Ascending aorta (tissue), 2 donors: ENCODE measurements at regions of chr1 and their contacts with region 1.

Region 1: GRCh38 chr1:157045251-157046218 is at the start of gene ARHGEF11:
- DNase-seq: peak; percentile 69 to 95
- H3K4me3 ChIP-seq: peak within 1 kb of the TSS; percentile 90 to 97
- H3K27ac ChIP-seq: peak within 1 kb of the TSS; percentile 87 to 95
- H3K4me1 ChIP-seq: peaks cover 17 to 31% of the 10 kb centered on the region in 2 donors
- H3K27me3 ChIP-seq: no peaks in the 10 kb centered on the region
- CTCF ChIP-seq: no peak
- total RNA-seq, gene ARHGEF11: 43.5 TPM

Region 2: DNA sequence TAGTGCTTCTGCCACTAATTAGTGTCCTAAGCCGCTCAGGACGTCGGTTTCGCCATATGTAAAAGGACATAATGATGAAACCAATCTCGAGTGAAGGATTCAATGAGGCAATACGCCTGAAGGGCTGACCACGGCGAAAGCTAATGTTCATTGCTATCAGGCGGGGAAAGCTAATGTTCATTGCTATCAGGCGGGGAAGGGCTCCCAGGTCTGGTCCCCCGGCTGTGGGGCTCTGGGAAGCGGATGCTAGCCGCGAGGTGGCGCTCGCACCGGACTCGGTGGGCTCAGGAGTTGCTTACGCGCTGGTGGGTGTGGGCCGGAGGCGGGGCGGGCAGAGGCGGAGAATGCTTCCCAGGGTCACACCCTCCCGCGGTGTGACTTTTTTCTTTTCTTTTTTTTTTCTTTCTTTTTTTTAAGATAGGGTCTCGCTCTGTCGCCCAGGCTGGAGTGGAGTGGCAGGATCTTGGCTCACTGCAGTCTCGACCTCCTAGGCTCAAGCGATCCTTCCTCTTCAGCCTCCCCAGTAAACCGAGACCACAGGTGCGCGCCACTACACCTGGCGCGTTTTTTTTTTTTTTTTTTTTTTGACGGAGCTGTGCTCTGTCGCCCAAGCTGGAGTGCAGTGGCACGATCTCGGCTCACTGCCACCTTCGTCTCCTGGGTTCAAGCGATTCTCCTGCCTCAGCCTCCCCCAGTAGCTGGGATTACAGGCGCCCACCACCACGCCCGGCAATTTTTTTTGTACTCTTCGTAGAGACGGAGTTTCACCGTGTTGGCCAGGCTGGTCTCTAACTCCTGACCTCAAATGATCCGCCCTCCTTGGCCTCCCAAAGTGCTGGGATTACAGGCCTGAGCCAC is 153.1 kb before region 1 on chr1:
- intact Hi-C with region 1: no loop called
- DNase-seq: peak; percentile 36 to 92
- H3K4me3 ChIP-seq: peak overlapping the region; percentile 31 to 70
- H3K27ac ChIP-seq: peak overlapping the region; percentile 92 to 94
- H3K4me1 ChIP-seq: peaks cover 6 to 16% of the 10 kb centered on the region in 2 donors
- H3K27me3 ChIP-seq: no peaks in the 10 kb centered on the region
- CTCF ChIP-seq: peak; percentile 75 to 84 (median 77)

Region 3: DNA sequence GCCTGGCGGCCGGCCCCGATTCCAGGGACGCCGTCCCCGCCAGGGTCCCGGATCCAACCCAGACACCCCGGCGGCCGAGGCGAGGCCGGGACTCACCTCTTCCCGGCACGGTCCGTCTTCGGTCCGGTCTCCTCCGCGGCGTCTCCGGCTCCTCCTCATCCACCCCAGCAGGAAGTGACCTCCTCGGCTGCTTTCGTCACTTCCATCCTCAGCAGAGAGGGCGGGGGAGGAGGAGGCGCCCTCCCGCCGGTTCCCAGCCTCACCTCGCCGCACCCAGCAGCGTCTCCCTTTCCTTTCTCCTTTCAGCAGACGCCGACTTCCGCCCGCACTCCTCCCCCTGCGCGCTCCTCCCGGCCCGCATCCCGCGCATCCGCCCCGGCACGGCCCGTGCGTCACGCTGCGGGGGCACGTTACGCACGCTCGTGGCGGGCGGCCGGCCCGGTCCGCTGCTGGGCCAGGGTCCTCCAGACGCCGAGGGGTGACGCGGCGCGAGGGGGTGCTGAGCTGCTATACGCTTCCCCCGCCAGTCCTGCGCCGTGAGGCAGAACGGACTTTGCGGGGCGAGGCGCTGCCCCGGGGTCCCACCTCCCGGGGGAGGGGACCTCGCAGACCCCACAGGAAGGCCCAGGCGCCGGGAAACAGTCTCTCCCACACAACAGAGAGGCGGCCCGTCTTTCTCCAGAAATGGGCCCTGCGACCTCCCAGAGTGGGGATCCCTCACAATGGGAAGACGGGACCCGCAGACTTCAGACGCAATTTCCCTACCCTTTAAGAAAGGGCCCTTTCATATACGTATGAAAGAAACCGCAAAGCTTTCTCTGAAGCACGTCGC is 92.9 kb after region 1 on chr1 and contains the start of gene ETV3:
- intact Hi-C with region 1: loop called (anchors 2 kb)
- DNase-seq: peak; percentile 71 to 96
- H3K4me3 ChIP-seq: peak within 1 kb of the TSS; percentile 80 to 98
- H3K27ac ChIP-seq: peak within 1 kb of the TSS; percentile 96 to 97
- H3K4me1 ChIP-seq: peaks cover 5 to 16% of the 10 kb centered on the region in 2 donors
- H3K27me3 ChIP-seq: no peaks in the 10 kb centered on the region
- CTCF ChIP-seq: no peak
- total RNA-seq, gene ETV3: 9.6 TPM